T-cell (primary cell): ENCODE measurements at regions of chr16 and their contacts with region 1.

Region 1: GRCh38 chr16:13816701-13817100 is 103.3 kb upstream of the ERCC4 start:
- DNase-seq: no peak
- ATAC-seq: no peak
- H3K4me3 ChIP-seq: no peak overlapping the region
- H3K4me3 Mint-ChIP-seq: no peak overlapping the region
- H3K27ac ChIP-seq: no peak overlapping the region
- H3K27ac Mint-ChIP-seq: no peak overlapping the region
- H3K4me1 ChIP-seq: no peaks in the 10 kb centered on the region
- H3K4me1 Mint-ChIP-seq: no peaks in the 10 kb centered on the region
- H3K27me3 ChIP-seq: peaks cover 0 to 4% of the 10 kb centered on the region in 2 experiments
- H3K27me3 Mint-ChIP-seq: peaks cover 3 to 11% of the 10 kb centered on the region in 2 donors

Region 2: GRCh38 chr16:13696017-13696416 is 120.7 kb before region 1 on chr16:
- CTCF ChIA-PET with region 1: interaction called in 1 of 2 experiments, 14 read pairs
- POLR2A ChIA-PET with region 1: no interaction called
- DNase-seq: no peak
- ATAC-seq: no peak
- H3K4me3 ChIP-seq: no peak overlapping the region
- H3K4me3 Mint-ChIP-seq: no peak overlapping the region
- H3K27ac ChIP-seq: no peak overlapping the region
- H3K27ac Mint-ChIP-seq: no peak overlapping the region
- H3K4me1 ChIP-seq: no peaks in the 10 kb centered on the region
- H3K4me1 Mint-ChIP-seq: no peaks in the 10 kb centered on the region
- H3K27me3 ChIP-seq: no peaks in the 10 kb centered on the region
- H3K27me3 Mint-ChIP-seq: no peaks in the 10 kb centered on the region